ENCODE measurements at regions of chr20 and their contacts with region 1.

Region 1: GRCh38 chr20:38875175-38875993 is 50.8 kb upstream of the FAM83D start:
- DNase-seq: peak; percentile 55
- H3K4me3 Mint-ChIP-seq: peak overlapping the region; percentile 43
- H3K27ac Mint-ChIP-seq: peak overlapping the region; percentile 95
- H3K4me1 Mint-ChIP-seq: peaks cover 71% of the 10 kb centered on the region
- H3K27me3 Mint-ChIP-seq: no peaks in the 10 kb centered on the region

Region 2: DNA sequence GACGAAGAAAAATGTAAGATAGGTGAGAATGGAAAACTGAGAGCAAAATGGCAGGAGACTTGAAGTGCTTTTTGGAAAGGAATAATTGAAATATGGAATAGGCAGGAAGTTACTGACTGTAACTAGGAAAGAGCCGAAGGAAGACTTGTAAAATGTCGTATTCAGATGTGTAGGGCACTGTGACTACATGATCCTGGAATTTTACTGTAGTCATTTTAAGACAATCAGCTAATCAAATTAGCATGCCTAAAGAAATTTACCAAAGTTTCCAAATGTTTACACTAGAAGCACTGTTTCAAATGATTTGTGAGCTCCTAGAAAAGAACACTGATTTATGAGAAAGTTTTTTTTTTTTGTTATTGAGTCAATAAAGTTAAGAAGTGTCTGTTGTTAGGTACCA is 315.6 kb before region 1 on chr20:
- intact Hi-C with region 1: no loop called
- DNase-seq: no peak
- H3K4me3 Mint-ChIP-seq: no peak overlapping the region
- H3K27ac Mint-ChIP-seq: no peak overlapping the region
- H3K4me1 Mint-ChIP-seq: no peaks in the 10 kb centered on the region
- H3K27me3 Mint-ChIP-seq: no peaks in the 10 kb centered on the region

Region 3: GRCh38 chr20:38805502-38805957 is 69.9 kb before region 1 on chr20 and contains the start of gene PPP1R16B:
- intact Hi-C with region 1: loop called (anchors 1 kb)
- DNase-seq: peak; percentile 78
- H3K4me3 Mint-ChIP-seq: peak within 1 kb of the TSS; percentile 91
- H3K27ac Mint-ChIP-seq: peak within 1 kb of the TSS; percentile 98
- H3K4me1 Mint-ChIP-seq: peaks cover 48% of the 10 kb centered on the region
- H3K27me3 Mint-ChIP-seq: no peaks in the 10 kb centered on the region
- total RNA-seq, gene PPP1R16B: 109 and 111 TPM in 2 replicates

Region 4: GRCh38 chr20:38833857-38834164 is 41.6 kb before region 1 on chr20:
- intact Hi-C with region 1: loop called (anchors 1 kb)
- DNase-seq: no peak
- H3K4me3 Mint-ChIP-seq: peak overlapping the region; percentile 42
- H3K27ac Mint-ChIP-seq: peak overlapping the region; percentile 87
- H3K4me1 Mint-ChIP-seq: peaks cover 65% of the 10 kb centered on the region
- H3K27me3 Mint-ChIP-seq: no peaks in the 10 kb centered on the region

Region 5: GRCh38 chr20:38842558-38842981 is 32.8 kb before region 1 on chr20:
- intact Hi-C with region 1: loop called (anchors 1 kb)
- DNase-seq: no peak
- H3K4me3 Mint-ChIP-seq: peak overlapping the region; percentile 72
- H3K27ac Mint-ChIP-seq: peak overlapping the region; percentile 97
- H3K4me1 Mint-ChIP-seq: peaks cover 78% of the 10 kb centered on the region
- H3K27me3 Mint-ChIP-seq: no peaks in the 10 kb centered on the region

Region 6: GRCh38 chr20:38863024-38863851 is 12.1 kb before region 1 on chr20:
- intact Hi-C with region 1: loop called (anchors 1 kb)
- DNase-seq: no peak
- H3K4me3 Mint-ChIP-seq: no peak overlapping the region
- H3K27ac Mint-ChIP-seq: peak overlapping the region; percentile 84
- H3K4me1 Mint-ChIP-seq: peaks cover 52% of the 10 kb centered on the region
- H3K27me3 Mint-ChIP-seq: no peaks in the 10 kb centered on the region

Region 7: DNA sequence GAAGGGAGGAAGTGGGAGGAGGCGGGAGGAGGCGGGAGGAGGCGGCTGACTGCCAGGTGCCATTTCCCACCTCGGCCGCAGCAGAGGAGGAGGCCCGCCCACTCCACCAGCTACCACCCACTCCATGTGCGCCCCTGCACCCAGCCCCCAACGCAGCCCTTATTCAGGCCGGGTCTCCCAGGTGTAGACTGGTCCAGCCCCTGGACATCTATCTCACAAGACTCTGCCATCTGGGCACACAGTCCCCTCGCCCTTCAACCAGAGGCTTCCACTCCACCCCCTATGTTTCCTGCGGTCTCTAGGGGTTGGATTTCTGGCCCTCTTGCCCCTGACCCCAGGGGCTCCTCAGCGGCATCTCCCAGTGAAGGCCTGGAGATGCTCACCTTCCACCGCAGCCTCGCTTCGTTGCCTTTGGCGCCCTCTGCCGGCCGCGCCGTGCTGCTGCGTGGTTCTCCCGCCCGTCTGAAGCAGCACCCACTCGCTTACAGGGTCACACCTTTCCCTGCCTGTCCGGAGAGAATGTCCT is 18.2 kb after region 1 on chr20:
- intact Hi-C with region 1: loop called (anchors 2 kb)
- DNase-seq: peak; percentile 72
- H3K4me3 Mint-ChIP-seq: no peak overlapping the region
- H3K27ac Mint-ChIP-seq: peak overlapping the region; percentile 62
- H3K4me1 Mint-ChIP-seq: peaks cover 45% of the 10 kb centered on the region
- H3K27me3 Mint-ChIP-seq: no peaks in the 10 kb centered on the region

Region 8: DNA sequence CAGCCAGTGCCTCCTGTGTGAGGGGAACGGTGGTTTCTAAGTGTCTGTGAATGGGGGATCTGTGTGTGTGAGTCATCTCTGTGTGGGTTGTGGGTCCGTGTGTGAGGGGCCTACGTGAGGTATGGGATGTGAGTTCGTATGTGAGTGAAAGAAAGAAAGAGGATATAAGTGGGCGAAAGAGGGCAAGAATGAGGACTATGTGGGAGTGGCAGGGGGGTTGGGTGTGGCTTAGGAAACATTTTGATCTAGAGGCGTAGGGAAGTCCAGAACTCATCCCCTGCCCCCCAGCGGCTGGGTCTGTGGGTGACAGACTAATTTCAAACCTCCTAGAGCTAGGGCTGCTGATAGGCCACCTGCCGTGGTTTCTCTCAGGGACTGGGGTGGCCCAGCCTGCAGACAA is 122.2 kb after region 1 on chr20:
- intact Hi-C with region 1: loop called (anchors 5 kb)
- DNase-seq: peak; percentile 39
- H3K4me3 Mint-ChIP-seq: peak overlapping the region; percentile 38
- H3K27ac Mint-ChIP-seq: peak overlapping the region; percentile 63
- H3K4me1 Mint-ChIP-seq: peaks cover 28% of the 10 kb centered on the region
- H3K27me3 Mint-ChIP-seq: no peaks in the 10 kb centered on the region

Region 9: GRCh38 chr20:39105549-39105948 is 230.2 kb after region 1 on chr20:
- intact Hi-C with region 1: no loop called
- DNase-seq: no peak
- H3K4me3 Mint-ChIP-seq: no peak overlapping the region
- H3K27ac Mint-ChIP-seq: no peak overlapping the region
- H3K4me1 Mint-ChIP-seq: no peaks in the 10 kb centered on the region
- H3K27me3 Mint-ChIP-seq: peaks cover 14% of the 10 kb centered on the region